ENCODE measurements at regions of chrX and their contacts with region 1.

Region 1: DNA sequence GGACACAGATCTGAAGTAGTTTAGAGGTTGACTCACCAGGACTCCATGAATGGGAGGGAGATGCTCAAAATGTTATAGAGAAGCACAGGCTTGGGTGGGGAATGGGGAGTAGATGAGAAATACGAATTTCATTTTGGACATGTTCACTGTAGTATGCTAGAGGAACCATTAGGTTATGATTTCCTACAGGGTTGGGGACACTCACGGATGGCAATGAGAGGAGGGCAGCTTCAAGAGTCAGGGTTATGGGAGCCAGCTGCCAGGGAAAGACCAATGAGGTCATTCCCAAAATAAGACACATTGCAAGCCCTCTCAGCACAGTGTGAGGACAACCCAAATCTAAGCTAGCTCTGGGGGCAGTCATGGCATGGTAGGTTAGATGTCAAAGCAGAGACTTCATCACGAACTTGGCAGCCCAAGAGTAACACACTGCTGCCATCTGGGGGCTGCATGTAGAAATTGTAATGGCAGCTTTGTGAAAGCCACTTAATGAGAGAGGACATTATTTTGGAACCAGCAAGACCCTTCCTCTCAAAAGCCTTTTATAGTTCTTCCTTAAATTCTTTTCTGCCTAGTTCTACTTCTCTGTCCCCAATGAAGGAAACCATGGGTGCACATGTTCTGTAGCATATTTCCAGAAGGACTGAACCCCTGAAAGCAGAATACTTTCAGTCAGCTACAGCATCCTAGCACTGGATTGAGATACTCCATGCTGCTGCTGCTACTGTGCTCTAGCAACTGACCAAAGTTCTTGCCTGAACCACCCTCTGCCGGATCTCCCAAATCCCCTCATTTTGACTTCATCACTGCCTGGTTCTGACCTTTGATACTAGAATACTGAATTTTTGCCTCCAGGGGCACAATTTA is 16.2 kb upstream of the ZCCHC12 start:
- DNase-seq: peak in 5 of 10 donors; percentile 21 to 89 (median 44)

Region 2: DNA sequence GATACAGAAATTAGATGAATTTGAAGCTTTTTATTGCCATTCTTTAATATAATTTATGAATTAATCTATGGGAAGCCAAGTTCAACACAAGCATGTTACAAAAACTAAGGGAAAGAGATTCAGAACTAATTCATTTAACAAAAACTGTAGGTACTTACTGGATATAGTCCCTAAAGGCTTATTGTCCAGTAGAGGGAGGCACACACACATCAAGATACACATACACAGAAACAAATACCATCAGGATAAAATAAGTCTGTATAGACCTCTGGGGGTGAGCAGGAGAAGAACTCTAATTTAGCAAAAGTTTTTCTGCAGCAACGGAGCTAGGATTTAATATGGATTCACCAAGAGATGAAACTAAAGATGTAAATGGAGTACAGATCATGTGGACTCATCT is 163.0 kb before region 1 on chrX:
- intact Hi-C with region 1: loop called (anchors 1 kb)
- DNase-seq: no peak

Measured in posterior cingulate gyrus (tissue), 11 donors.